ENCODE measurements at regions of chr11 and their contacts with region 1.

Region 1: DNA sequence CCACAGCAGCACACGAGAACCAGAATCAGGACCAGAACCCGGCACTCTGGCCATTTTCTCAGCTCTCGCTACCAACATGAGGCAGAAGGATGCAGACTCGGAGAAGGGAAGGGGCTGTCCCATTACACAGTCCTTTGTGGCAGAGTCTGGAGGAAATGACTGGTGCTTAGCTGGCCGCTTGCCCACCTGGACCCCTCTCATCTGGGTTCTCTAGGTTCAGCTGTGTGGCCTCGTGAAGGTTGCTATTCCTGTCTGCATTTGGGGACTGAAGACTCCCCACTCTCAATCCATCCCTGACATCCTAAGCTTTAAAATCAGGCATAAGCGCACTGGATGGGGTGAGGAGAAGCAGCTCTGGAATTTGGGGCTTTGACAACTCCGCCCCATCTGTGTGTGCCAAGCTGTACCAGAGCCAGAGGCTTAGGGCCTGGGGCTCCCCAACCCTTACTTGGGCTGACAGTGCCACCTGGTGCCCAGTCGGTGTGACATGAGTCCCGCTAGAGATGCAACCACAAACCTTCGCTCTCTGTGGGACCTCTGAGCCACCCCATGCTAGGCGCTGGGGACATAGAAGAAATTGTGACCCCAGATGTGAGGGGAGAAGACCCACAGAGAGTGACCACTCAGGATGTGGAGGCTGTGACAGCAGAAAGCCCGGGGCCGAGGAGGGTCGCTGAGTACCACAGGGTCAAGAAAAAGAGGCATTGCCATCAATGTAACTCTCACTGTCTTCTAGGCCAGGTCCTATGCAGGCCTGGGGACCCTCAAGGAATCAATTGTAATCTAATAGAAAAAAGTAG is 35.9 kb upstream of the FCHSD2 start:
- DNase-seq: peak; percentile 88
- H3K4me3 Mint-ChIP-seq: no peak overlapping the region
- H3K27ac Mint-ChIP-seq: no peak overlapping the region
- H3K4me1 Mint-ChIP-seq: no peaks in the 10 kb centered on the region
- H3K27me3 Mint-ChIP-seq: no peaks in the 10 kb centered on the region
- CTCF ChIP-seq: peak; percentile 79

Region 2: DNA sequence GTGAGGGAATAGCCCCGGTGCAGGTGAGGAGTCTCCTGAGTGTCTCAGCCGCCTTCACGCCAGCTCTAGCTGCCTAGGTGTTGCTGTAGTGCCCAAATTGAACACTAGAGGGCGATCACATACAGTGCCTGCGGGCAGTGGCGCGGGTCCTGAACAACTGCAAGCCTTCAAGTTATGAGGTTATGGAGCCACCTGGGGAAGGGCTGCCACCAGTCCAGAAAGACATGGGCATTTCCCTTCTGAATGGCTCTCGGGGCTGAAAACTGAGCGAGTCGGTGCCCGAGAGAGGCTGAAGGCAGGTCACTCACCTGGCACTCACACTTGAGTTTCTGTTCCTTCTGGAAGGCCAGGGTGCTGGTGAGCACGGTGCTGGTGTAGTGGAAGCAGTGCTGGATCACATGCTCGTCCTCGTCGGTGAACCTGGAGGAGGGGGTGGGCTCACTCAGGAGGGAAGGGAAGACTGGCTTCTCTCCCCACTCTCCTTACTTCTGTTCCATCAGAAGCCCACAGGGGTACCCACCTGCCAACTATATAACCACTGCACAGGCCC is 592.1 kb before region 1 on chr11:
- CTCF ChIA-PET with region 1: interaction called, 6 read pairs
- POLR2A ChIA-PET with region 1: no interaction called
- intact Hi-C with region 1: loop called (anchors 5 kb)
- DNase-seq: peak; percentile 71
- H3K4me3 Mint-ChIP-seq: no peak overlapping the region
- H3K27ac Mint-ChIP-seq: no peak overlapping the region
- H3K4me1 Mint-ChIP-seq: peaks cover 3% of the 10 kb centered on the region
- H3K27me3 Mint-ChIP-seq: peaks cover 37% of the 10 kb centered on the region
- CTCF ChIP-seq: peak; percentile 77

Region 3: DNA sequence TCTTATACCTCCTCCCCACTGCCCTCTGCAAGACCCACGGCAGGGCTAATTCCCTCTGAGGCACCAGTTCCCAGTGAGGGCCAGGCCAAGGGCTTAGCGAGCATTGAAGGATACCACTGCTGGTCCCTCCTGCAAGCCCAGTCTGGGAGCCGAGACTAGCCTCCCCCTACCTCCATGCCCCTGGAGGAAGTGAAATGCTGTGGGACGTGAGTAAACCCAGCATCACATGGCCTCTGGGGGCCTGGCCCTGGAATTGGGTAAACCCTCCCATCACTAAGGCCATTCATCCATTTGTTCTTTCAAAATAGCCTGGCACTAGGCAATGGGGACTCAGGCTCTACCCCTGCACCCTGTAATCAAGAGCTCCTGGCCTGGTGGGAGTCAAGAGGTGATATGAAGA is 450.5 kb before region 1 on chr11:
- CTCF ChIA-PET with region 1: interaction called, 46 read pairs
- POLR2A ChIA-PET with region 1: interaction called, 3 read pairs
- intact Hi-C with region 1: loop called (anchors 1 kb)
- DNase-seq: no peak
- H3K4me3 Mint-ChIP-seq: no peak overlapping the region
- H3K27ac Mint-ChIP-seq: no peak overlapping the region
- H3K4me1 Mint-ChIP-seq: peaks cover 10% of the 10 kb centered on the region
- H3K27me3 Mint-ChIP-seq: no peaks in the 10 kb centered on the region
- CTCF ChIP-seq: no peak

Region 4: GRCh38 chr11:72848846-72849466 is 329.0 kb before region 1 on chr11:
- CTCF ChIA-PET with region 1: interaction called, 3 read pairs
- POLR2A ChIA-PET with region 1: no interaction called
- intact Hi-C with region 1: loop called (anchors 5 kb)
- DNase-seq: peak; percentile 50
- H3K4me3 Mint-ChIP-seq: no peak overlapping the region
- H3K27ac Mint-ChIP-seq: no peak overlapping the region
- H3K4me1 Mint-ChIP-seq: no peaks in the 10 kb centered on the region
- H3K27me3 Mint-ChIP-seq: no peaks in the 10 kb centered on the region
- CTCF ChIP-seq: peak; percentile 53

Region 5: GRCh38 chr11:73141848-73142286 is 36.1 kb before region 1 on chr11:
- CTCF ChIA-PET with region 1: interaction called, 12 read pairs
- POLR2A ChIA-PET with region 1: no interaction called
- intact Hi-C with region 1: loop called (anchors 1 kb)
- DNase-seq: peak; percentile 58
- H3K4me3 Mint-ChIP-seq: peak overlapping the region; percentile 99
- H3K27ac Mint-ChIP-seq: peak overlapping the region; percentile 75
- H3K4me1 Mint-ChIP-seq: peaks cover 7% of the 10 kb centered on the region
- H3K27me3 Mint-ChIP-seq: no peaks in the 10 kb centered on the region
- CTCF ChIP-seq: no peak

Region 6: DNA sequence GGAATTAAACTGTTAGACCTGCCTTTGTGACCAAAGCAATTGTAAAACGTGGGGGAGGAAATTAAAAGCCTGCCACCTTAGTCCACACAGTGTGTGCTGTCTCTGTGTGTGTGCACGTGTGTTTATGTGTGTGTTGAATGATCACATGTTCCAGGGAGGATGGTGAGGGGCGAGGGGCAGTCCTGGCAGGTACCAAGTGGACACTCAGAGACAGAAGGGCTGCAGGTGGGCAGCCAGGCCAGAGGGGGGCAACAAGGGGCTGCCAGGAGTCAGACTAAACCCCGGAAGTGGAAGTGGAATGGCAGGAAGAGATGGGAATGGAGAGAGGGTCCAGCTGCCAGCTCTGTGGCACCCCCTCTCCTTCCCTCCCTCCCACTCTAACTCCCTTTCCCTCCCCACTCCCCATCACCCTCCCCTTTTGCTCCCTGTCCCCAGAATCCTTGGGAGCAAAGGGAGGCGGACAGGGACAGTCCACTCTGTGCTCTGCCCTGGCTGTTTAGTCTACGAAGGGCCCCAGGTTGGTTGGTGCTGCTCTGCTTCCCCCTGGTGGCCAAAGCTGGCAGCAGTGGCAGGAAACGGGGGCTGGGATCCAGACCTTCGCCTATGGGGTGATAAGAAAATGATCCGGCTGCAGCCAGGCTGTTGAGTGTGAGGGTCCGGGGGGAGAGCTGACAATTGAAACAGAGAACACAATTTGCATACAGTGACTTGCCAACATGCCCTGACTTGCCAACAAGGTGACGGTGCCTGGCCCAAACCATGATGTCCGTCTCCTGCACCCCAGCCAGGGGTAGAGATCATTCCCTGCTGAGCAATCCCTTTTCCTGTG is 64.5 kb after region 1 on chr11:
- CTCF ChIA-PET with region 1: interaction called, 238 read pairs
- POLR2A ChIA-PET with region 1: interaction called, 3 read pairs
- intact Hi-C with region 1: no loop called
- DNase-seq: peak; percentile 70
- H3K4me3 Mint-ChIP-seq: no peak overlapping the region
- H3K27ac Mint-ChIP-seq: no peak overlapping the region
- H3K4me1 Mint-ChIP-seq: peaks cover 12% of the 10 kb centered on the region
- H3K27me3 Mint-ChIP-seq: peaks cover 12% of the 10 kb centered on the region
- CTCF ChIP-seq: peak; percentile 98